IMR-90 (cell line): ENCODE measurements at regions of chr3 and their contacts with region 1.

Region 1: DNA sequence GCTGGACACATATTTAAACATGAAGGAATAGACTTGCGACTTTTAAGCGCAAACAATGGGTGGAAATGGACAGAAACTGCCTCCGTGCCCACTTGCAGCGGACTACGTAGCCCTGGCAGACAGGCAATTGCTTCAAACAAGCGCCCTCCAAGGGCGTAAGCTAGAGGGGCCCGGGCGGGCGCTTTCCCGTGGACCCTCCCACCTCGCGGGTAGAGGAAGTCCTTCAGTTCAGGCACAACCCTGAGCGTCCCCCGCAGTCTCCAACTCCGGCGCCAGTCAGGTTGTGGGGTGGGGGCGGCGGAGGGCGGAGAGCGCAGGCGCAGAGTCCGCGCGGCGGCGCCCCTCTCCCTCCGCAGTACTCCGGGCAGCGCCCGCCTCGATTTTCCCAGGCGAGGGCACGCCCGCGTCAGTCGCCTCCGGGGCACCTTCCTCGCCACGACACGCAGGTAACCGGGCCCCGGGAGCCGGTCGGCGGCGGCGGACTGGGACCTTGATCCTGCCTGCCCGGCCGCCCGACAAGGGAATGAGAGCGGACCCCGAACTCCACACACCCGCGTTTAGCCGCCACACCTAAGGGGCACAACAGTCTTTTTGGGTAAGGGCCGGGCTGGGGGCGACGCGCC is at the start of gene SLC35G2:
- DNase-seq: peak; percentile 52
- ATAC-seq: peak; percentile 79
- H3K4me3 ChIP-seq: peak within 1 kb of the TSS; percentile 48
- H3K27ac ChIP-seq: peak within 1 kb of the TSS; percentile 75
- H3K4me1 ChIP-seq: peaks cover 4% of the 10 kb centered on the region
- H3K27me3 ChIP-seq: no peaks in the 10 kb centered on the region
- CTCF ChIP-seq: 0 out of 2 replicates have a peak, but pooled peaks have one; percentile 4
- POLR2A ChIP-seq: peak; percentile 12; the same call in 1 of the 2 replicates
- RAD21 ChIP-seq: no peak
- total RNA-seq, gene SLC35G2: 6.6 and 8.6 TPM in 2 replicates

Region 2: DNA sequence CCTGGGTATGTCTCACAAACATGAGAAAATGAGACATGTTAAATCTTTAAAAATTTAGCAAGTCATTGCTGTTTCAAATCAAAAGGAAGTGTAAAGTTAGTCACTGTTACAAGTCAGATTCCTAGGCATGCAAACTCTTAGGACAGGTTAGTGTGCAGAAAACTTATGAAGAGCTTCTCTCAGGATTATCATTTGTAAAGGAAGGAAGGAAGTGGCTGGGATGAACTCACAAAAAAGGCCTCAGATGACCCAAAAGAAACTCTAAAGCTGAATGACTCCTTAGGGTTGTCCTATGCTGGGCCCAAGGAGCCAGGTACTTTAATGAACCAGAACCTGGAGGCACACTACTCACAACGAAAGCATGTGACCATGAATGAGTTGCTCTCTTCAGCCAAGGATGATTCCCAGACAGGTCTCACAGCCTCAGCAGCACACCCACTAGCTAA is 647.8 kb before region 1 on chr3:
- CTCF ChIA-PET with region 1: no interaction called
- POLR2A ChIA-PET with region 1: no interaction called
- dilution Hi-C with region 1: no loop called
- in situ Hi-C with region 1: no loop called
- intact Hi-C with region 1: no loop called
- DNase-seq: peak; percentile 36
- ATAC-seq: peak; percentile 35; the same call in 1 of the 2 replicates
- H3K4me3 ChIP-seq: no peak overlapping the region
- H3K27ac ChIP-seq: no peak overlapping the region
- H3K4me1 ChIP-seq: peaks cover 5% of the 10 kb centered on the region; the same call in 1 of the 2 replicates
- H3K27me3 ChIP-seq: no peaks in the 10 kb centered on the region
- CTCF ChIP-seq: no peak
- POLR2A ChIP-seq: no peak
- RAD21 ChIP-seq: no peak

Region 3: DNA sequence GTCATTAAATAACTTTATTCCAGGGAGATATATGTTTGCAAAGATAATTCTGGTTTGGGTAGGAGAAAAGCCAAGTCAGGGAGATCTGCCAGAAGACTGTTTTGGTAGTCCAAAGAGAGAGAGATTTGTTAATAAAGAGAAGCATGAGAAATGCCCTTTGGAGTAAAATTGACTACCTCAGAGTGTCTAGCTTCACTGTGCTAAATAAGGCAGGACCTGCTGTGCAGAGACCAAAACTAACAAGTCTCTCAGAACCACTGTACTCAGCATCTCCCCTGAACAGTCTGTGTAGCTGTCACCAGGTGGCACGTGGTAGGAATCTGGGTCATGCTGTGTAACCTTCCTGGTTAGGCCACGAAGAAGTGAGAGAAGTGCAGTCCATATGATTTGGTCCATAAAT is 31.5 kb before region 1 on chr3:
- CTCF ChIA-PET with region 1: no interaction called
- POLR2A ChIA-PET with region 1: interaction called, 3 read pairs
- dilution Hi-C with region 1: no loop called
- in situ Hi-C with region 1: no loop called
- intact Hi-C with region 1: loop called (anchors 2 kb)
- DNase-seq: peak; percentile 45
- ATAC-seq: peak; percentile 19
- H3K4me3 ChIP-seq: no peak overlapping the region
- H3K27ac ChIP-seq: peak overlapping the region; percentile 90
- H3K4me1 ChIP-seq: peaks cover 18% of the 10 kb centered on the region
- H3K27me3 ChIP-seq: no peaks in the 10 kb centered on the region
- CTCF ChIP-seq: no peak
- POLR2A ChIP-seq: no peak
- RAD21 ChIP-seq: no peak

Region 4: GRCh38 chr3:136835089-136835816 is 16.4 kb after region 1 on chr3:
- CTCF ChIA-PET with region 1: no interaction called
- POLR2A ChIA-PET with region 1: interaction called, 17 read pairs
- dilution Hi-C with region 1: no loop called
- in situ Hi-C with region 1: no loop called
- intact Hi-C with region 1: no loop called
- DNase-seq: no peak
- ATAC-seq: no peak
- H3K4me3 ChIP-seq: no peak overlapping the region
- H3K27ac ChIP-seq: no peak overlapping the region
- H3K4me1 ChIP-seq: peaks cover 18% of the 10 kb centered on the region
- H3K27me3 ChIP-seq: no peaks in the 10 kb centered on the region
- CTCF ChIP-seq: no peak
- POLR2A ChIP-seq: no peak
- RAD21 ChIP-seq: no peak

Region 5: DNA sequence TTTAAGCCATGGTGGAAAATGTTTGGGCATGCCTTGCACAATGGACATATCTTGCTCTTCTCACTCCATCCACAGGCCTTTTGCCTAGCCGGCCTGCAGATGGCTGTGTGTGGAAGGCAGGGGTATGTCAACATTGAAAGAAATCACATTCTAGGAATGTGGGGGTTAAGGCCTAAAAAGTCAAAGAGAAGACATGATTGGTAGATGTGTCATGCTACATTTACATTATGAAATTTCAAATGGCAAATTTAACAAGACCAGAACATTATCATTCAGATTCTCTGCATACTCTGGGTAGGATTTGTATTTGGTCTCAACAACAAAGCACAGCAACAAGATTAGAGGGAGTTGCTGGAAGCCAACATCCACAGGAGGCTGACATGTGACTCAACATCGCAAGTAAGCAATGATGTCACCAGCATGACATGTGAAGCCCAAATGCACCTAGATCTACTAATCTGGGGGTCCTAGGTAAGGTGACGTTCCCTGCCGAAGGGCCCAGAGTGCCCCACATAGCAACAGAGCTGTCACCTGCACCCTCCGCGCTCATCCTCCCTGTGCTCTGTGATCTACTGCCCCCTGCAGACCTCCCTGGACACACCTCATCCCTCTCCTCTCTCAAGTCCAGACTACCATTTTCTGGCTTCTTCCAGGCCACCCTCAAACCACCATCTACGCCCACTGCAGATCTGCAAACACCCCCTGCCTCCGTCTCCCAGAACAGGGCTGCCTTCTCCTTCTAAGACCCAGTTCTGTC is 1230.5 kb after region 1 on chr3:
- CTCF ChIA-PET with region 1: no interaction called
- POLR2A ChIA-PET with region 1: no interaction called
- dilution Hi-C with region 1: no loop called
- in situ Hi-C with region 1: no loop called
- intact Hi-C with region 1: no loop called
- DNase-seq: peak; percentile 94
- ATAC-seq: peak; percentile 84
- H3K4me3 ChIP-seq: no peak overlapping the region
- H3K27ac ChIP-seq: peak overlapping the region; percentile 93
- H3K4me1 ChIP-seq: peaks cover 11% of the 10 kb centered on the region
- H3K27me3 ChIP-seq: no peaks in the 10 kb centered on the region
- CTCF ChIP-seq: peak; percentile 3; the same call in 1 of the 2 replicates
- POLR2A ChIP-seq: no peak
- RAD21 ChIP-seq: peak; percentile 18; the same call in 1 of the 2 replicates